Psoas muscle (tissue), 8 donors: ENCODE measurements at regions of chr15 and their contacts with region 1.

Region 1: DNA sequence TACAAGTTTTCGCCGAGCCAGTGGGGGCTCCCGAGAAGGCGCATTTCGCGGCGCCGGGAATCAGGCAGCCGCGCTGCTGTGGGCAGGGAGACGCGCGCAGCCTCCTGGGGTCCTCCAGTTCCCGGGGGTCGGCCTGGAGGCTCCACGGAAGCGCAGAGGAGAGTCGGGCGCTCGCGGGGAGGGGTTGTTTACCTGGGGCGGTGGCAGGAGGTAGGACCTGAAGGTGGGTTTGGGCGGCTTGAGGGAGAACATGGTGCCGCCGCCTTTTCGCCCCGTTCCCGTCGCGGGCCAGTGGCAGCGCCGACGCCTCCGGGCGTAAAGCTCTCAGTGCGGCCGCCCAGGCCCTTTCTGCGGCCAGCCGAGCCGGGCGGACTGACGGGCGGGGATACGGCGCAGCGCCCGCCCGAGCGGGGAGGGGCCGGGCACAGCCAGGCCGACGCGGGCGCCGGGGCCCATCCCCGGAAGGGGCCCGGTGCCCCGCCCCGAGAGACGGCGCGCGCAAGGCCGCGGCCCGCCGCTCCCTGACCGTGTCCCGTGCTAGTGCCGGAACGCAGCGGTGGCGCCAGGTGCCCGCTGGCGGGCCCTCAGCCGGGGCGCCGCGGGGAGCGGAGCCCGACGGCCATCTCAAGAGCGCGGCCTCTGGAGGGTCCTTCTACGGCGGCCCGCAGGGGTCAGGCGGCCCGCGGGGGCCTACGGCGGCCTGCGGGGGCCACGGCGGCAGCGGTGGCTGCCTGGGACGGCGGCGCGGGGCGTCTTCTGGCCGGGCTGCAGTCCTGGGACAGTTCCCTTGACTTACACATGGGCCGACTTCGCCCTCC is at the start of gene MTMR10:
- DNase-seq: peak; percentile 66 to 89
- ATAC-seq: peak; percentile 90 to 92 (median 91)
- H3K4me3 ChIP-seq: peak within 1 kb of the TSS; percentile 84
- H3K27ac ChIP-seq: peak within 1 kb of the TSS; percentile 92
- H3K4me1 ChIP-seq: peaks cover 43% of the 10 kb centered on the region
- H3K27me3 ChIP-seq: no peaks in the 10 kb centered on the region
- CTCF ChIP-seq: no peak
- total RNA-seq, gene MTMR10: 22.1 to 52.3 (median 37.1) TPM

Region 2: GRCh38 chr15:30903497-30904201 is 87.8 kb before region 1 on chr15 and contains the start of gene FAN1:
- intact Hi-C with region 1: loop called in 1 of 2 experiments (anchors 5 kb)
- DNase-seq: peak; percentile 79 to 92
- ATAC-seq: peak; percentile 98 to 99 (median 98)
- H3K4me3 ChIP-seq: peak within 1 kb of the TSS; percentile 86
- H3K27ac ChIP-seq: peak within 1 kb of the TSS; percentile 89
- H3K4me1 ChIP-seq: peaks cover 27% of the 10 kb centered on the region
- H3K27me3 ChIP-seq: no peaks in the 10 kb centered on the region
- CTCF ChIP-seq: no peak
- total RNA-seq, gene FAN1: 13.5 to 27.5 (median 25.2) TPM

Region 3: GRCh38 chr15:30922480-30923311 is 68.8 kb before region 1 on chr15:
- intact Hi-C with region 1: loop called in 1 of 2 experiments (anchors 2 kb)
- DNase-seq: no peak
- ATAC-seq: peak; percentile 30 to 43 (median 36)
- H3K4me3 ChIP-seq: no peak overlapping the region
- H3K27ac ChIP-seq: peak overlapping the region; percentile 72
- H3K4me1 ChIP-seq: peaks cover 50% of the 10 kb centered on the region
- H3K27me3 ChIP-seq: no peaks in the 10 kb centered on the region
- CTCF ChIP-seq: no peak

Region 4: GRCh38 chr15:30933293-30933692 is 58.2 kb before region 1 on chr15:
- intact Hi-C with region 1: loop called in 1 of 2 experiments (anchors 2 kb)
- DNase-seq: no peak
- ATAC-seq: no peak
- H3K4me3 ChIP-seq: no peak overlapping the region
- H3K27ac ChIP-seq: no peak overlapping the region
- H3K4me1 ChIP-seq: no peaks in the 10 kb centered on the region
- H3K27me3 ChIP-seq: no peaks in the 10 kb centered on the region
- CTCF ChIP-seq: no peak

Region 5: GRCh38 chr15:30953731-30954378 is 37.6 kb before region 1 on chr15:
- intact Hi-C with region 1: loop called (anchors 5 kb)
- DNase-seq: peak; percentile 22 to 79
- ATAC-seq: peak; percentile 71 to 81 (median 80)
- H3K4me3 ChIP-seq: no peak overlapping the region
- H3K27ac ChIP-seq: peak overlapping the region; percentile 72
- H3K4me1 ChIP-seq: peaks cover 17% of the 10 kb centered on the region
- H3K27me3 ChIP-seq: no peaks in the 10 kb centered on the region
- CTCF ChIP-seq: no peak

Region 6: DNA sequence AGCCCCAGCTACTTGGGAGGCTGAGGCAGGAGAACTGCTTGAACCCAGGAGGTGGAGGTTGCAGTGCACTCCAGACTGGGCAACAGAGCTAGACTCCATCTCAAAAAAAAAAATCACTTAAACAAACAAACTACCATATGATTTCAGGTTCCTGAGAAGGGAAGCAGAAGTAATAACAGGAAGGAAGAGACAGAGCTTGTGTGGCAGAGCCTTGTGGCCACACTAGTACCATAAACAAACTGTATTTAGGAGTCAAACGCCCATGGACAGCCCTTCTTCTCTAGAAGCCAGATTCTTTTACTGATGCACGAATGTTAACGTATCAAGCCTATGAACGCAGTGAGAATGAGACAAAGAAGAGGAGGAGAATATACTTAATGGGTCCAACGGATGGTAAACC is 12.0 kb before region 1 on chr15:
- intact Hi-C with region 1: no loop called
- DNase-seq: no peak
- ATAC-seq: no peak
- H3K4me3 ChIP-seq: no peak overlapping the region
- H3K27ac ChIP-seq: no peak overlapping the region
- H3K4me1 ChIP-seq: peaks cover 66% of the 10 kb centered on the region
- H3K27me3 ChIP-seq: no peaks in the 10 kb centered on the region
- CTCF ChIP-seq: no peak

Region 7: GRCh38 chr15:31079519-31079918 is 88.1 kb after region 1 on chr15:
- intact Hi-C with region 1: loop called in 1 of 2 experiments (anchors 10 kb)
- DNase-seq: no peak
- ATAC-seq: no peak
- H3K4me3 ChIP-seq: no peak overlapping the region
- H3K27ac ChIP-seq: no peak overlapping the region
- H3K4me1 ChIP-seq: no peaks in the 10 kb centered on the region
- H3K27me3 ChIP-seq: peaks cover 0 to 2% (median 0%) of the 10 kb centered on the region in 3 donors
- CTCF ChIP-seq: no peak

Region 8: GRCh38 chr15:31128919-31129768 is 137.7 kb after region 1 on chr15:
- intact Hi-C with region 1: loop called in 1 of 2 experiments (anchors 5 kb)
- DNase-seq: peak; percentile 46 to 87
- ATAC-seq: peak; percentile 58 to 98 (median 89)
- H3K4me3 ChIP-seq: peak overlapping the region; percentile 47
- H3K27ac ChIP-seq: no peak overlapping the region
- H3K4me1 ChIP-seq: peaks cover 7% of the 10 kb centered on the region
- H3K27me3 ChIP-seq: no peaks in the 10 kb centered on the region
- CTCF ChIP-seq: peak; percentile 95